ENCODE measurements at regions of chr10 and their contacts with region 1.

Region 1: DNA sequence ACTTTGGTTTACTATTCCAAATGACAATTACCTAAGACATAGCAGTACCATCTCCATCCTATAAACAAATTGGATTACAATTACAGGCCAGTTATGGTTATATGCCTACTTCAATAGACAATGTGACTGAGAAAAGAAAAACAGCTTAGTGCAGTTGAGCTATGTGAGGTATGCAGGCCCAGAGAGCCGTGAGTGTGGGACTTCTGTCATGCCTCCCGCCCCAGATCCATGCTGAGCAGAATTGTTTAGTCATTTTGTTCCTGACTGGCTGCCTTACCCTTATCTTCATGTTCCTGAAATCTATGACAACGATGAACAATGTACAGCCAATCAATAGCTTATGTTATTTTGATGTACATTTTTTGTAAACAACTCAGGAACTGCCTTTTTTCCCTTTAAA is 21.7 kb downstream of the LARP4B start:
- DNase-seq: no peak
- ATAC-seq: no peak
- H3K4me3 Mint-ChIP-seq: no peak overlapping the region
- H3K27ac Mint-ChIP-seq: no peak overlapping the region
- H3K4me1 Mint-ChIP-seq: peaks cover 11% of the 10 kb centered on the region
- H3K27me3 Mint-ChIP-seq: no peaks in the 10 kb centered on the region
- CTCF ChIP-seq: no peak

Region 2: GRCh38 chr10:920450-920849 is 10.6 kb after region 1 on chr10:
- CTCF ChIA-PET with region 1: no interaction called
- POLR2A ChIA-PET with region 1: no interaction called
- intact Hi-C with region 1: loop called (anchors 1 kb)
- DNase-seq: no peak
- ATAC-seq: no peak
- H3K4me3 Mint-ChIP-seq: no peak overlapping the region
- H3K27ac Mint-ChIP-seq: no peak overlapping the region
- H3K4me1 Mint-ChIP-seq: peaks cover 33% of the 10 kb centered on the region
- H3K27me3 Mint-ChIP-seq: no peaks in the 10 kb centered on the region
- CTCF ChIP-seq: no peak